HAP-1 (cell line): ENCODE measurements at regions of chr4 and their contacts with region 1.

Region 1: DNA sequence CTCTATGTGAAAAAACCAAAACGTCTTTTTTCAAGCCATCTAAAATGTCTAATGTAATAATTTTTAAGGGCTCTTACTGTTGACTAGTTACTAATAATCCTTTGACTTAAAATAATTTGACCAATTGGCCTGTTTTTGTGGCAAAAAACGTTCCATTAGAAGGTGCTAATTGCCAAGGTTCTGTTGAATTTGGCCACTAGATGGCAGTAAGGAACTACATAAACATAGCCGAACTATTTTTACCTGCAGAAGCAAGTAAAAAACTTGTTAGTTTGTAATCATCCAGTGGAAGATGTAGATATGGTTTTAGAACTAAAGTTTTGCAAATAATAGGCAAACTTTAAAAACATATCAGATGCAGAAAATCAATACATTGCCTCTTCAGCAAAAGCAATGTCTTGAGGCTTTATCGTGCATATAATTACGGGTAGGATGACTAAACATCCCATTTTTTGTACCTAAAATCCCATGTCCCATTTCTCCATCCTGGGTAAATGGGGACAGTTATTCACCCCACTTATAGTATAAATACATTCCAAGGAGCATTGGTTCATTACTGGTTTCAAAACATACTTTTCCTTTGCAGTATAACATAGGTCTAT is 57.6 kb downstream of the PROM1 start:
- DNase-seq: peak; percentile 49 to 61
- H3K4me3 ChIP-seq: no peak overlapping the region
- H3K4me1 ChIP-seq: peaks cover 14% of the 10 kb centered on the region
- H3K27me3 ChIP-seq: peaks cover 12% of the 10 kb centered on the region; the same call in 1 of the 2 replicates

Region 2: DNA sequence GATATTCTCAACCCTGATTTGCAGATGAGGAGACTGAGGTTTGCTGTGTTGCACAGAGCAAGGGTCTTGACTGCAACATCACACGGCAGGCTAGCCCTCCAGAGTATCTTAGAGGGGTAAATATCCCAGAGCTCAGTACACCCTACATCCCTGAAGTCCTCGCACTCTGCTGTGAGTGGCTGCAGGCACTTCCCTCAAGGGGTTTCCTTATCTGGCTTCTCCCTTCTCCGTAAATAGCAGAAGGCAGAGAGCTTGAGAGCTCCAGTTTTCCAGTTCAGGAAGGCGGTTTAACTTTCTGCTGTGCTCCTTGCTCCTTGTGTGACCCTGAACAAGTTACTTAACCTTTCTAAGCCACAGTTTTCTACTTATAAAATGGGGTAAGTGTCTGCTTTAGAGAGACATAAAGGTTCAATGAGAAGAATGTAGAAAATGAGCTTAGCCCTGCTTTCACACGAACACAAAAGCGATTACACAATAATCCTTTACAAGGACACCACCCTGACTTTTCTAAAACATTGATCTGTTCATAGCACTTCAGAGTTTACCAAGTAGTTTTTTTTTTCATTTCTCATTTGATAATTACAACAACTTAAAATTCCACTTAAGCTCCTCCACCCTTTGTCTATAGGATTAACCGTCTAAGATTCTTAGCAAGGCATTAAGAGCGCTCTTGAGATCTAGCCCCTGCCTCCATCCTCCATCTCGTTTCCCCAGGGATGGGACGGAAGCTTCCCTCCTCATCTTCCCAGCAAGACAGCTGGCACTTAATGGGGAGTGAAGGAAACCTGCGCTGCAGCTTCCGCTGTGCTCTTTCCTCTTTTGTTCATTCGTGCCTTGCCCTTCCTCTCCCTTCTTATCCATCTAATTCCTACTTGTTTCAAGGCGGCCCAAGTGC is 131.6 kb after region 1 on chr4:
- in situ Hi-C with region 1: loop called (anchors 25 kb)
- DNase-seq: peak; percentile 76 to 98
- H3K4me3 ChIP-seq: no peak overlapping the region
- H3K4me1 ChIP-seq: peaks cover 15% of the 10 kb centered on the region
- H3K27me3 ChIP-seq: peaks cover 79% of the 10 kb centered on the region

Region 3: GRCh38 chr4:16205298-16206164 is 179.3 kb after region 1 on chr4:
- in situ Hi-C with region 1: loop called (anchors 10 kb)
- DNase-seq: peak in 1 of 2 experiments; percentile 46
- H3K4me3 ChIP-seq: no peak overlapping the region
- H3K4me1 ChIP-seq: no peaks in the 10 kb centered on the region
- H3K27me3 ChIP-seq: no peaks in the 10 kb centered on the region